ENCODE measurements at regions of chr1 and their contacts with region 1.

Region 1: DNA sequence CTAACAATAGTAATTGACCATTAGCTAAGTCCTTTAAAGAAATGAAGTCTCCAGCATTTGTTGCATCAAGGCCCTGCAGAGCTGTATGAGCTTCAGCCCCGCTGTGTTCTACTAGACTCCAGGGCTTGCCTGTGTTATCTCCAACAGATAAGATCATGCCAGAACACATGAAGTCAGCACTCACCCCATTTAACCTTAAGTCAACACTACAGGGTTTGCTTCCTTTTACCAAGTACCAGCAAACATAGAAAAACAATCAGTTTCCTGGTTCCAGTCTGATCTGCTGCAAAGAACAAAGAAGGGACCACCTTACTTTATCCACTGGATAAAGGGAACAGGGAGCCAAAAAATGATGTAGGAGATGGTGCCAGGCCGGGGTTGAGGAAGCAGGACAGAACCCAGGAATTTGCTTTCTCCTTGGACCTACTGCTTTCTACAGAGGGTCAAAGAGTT is 41.3 kb upstream of the ENAH start:
- DNase-seq: peak in 4 of 5 donors; percentile 41 to 65 (median 54)
- ATAC-seq: peak; percentile 90 to 98 (median 94)
- H3K4me3 ChIP-seq: no peak overlapping the region
- H3K27ac ChIP-seq: peak overlapping the region in 9 of 12 donors; percentile 14 to 78 (median 52)
- H3K4me1 ChIP-seq: peaks cover 0 to 76% (median 37%) of the 10 kb centered on the region in 12 donors
- H3K27me3 ChIP-seq: no peaks in the 10 kb centered on the region
- CTCF ChIP-seq: no peak
- POLR2A ChIP-seq: no peak

Region 2: DNA sequence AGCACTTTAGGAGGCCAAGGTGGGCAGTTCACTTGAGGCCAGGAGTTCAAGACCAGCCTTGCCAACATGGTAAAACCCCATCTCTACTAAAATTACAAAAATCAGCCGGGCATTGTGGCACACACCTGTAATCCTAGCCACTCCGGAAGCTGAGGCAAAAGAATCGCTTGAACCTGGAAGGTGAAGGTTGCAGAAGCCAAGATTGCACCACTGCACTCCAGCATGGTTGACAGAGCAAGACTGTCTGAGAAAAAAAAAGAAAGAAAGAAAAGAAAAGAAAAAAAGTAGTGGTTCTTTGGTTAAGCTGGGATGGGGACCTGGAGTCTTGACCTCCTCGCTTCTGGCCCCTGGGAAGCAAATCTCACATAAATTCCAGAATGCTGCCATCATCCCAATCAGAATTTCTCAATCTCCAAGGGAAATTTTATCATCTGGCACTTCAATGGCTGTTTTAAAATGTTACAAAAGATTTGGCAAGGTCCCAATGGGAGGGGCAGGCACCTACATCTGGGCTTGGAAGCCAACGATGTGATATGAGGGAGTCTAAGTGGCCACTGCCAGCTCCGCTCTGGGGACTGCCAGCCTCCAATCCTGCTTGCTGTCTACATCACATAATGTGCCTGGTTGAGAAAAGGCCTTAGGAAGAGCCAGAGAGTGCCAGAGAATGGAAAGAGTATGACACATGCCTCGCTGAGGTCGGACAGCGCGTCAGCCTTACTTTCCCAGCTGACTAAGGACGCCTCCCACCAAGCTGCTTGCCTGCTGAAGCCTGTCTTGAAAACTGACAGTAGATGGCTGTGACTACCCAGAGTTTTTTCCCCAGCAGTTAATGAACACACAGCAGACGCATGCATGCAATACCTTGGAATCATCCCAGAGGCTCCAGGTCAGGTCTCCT is 41.3 kb after region 1 on chr1:
- intact Hi-C with region 1: loop called in 3 of 10 experiments (anchors 5 to 10 kb)
- DNase-seq: peak; percentile 56 to 90 (median 74)
- ATAC-seq: peak; percentile 85 to 99 (median 97)
- H3K4me3 ChIP-seq: no peak overlapping the region
- H3K27ac ChIP-seq: peak overlapping the region; percentile 36 to 81 (median 60)
- H3K4me1 ChIP-seq: peaks cover 0 to 27% (median 21%) of the 10 kb centered on the region in 12 donors
- H3K27me3 ChIP-seq: no peaks in the 10 kb centered on the region
- CTCF ChIP-seq: peak in 2 of 12 donors; percentile 23
- POLR2A ChIP-seq: no peak

Region 3: GRCh38 chr1:225746361-225747179 is 52.4 kb after region 1 on chr1:
- intact Hi-C with region 1: loop called in 5 of 10 experiments (anchors 5 to 10 kb)
- DNase-seq: peak; percentile 78 to 85 (median 83)
- ATAC-seq: peak; percentile 91 to 98 (median 97)
- H3K4me3 ChIP-seq: peak overlapping the region in 11 of 12 donors; percentile 3 to 60 (median 48)
- H3K27ac ChIP-seq: peak overlapping the region; percentile 78 to 96 (median 88)
- H3K4me1 ChIP-seq: peaks cover 2 to 48% (median 27%) of the 10 kb centered on the region in 12 donors
- H3K27me3 ChIP-seq: no peaks in the 10 kb centered on the region
- CTCF ChIP-seq: peak in 6 of 12 donors; percentile 13 to 33 (median 28)
- POLR2A ChIP-seq: no peak

Region 4: DNA sequence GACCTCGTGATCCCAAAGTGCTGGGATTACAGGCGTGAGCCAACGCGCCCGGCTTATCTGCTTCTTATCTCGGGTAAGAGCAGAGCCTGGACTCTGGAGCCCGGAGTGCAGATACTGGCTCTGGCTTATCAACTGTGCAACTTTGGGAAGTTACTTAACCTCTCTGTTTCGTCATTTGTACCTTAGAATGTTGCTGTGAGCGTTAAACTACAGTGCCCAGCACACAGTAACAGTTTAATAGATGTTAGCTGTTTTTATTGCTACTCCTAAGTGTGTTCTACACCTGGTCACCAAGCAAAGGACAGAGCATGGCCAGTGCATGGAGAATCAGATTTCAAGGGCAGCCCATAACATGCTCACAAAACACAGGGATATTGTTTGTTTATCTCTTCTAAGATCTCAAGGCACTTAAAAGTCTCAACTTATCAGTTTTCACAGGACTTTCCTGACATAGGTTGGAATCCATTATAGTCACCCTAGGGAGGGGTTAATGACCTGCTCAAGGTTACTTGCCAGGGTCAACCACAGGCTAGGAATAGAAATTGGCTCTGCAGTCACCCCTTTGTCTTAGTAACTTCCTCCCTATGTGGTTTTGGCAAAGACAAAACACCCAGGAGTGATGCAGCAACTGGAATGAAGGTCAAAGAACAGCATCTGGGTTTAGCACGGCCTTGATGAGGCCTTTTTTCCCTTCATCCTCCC is 60.9 kb after region 1 on chr1:
- intact Hi-C with region 1: loop called in 3 of 10 experiments (anchors 5 to 10 kb)
- DNase-seq: peak; percentile 48 to 74 (median 64)
- ATAC-seq: peak; percentile 81 to 93 (median 88)
- H3K4me3 ChIP-seq: no peak overlapping the region
- H3K27ac ChIP-seq: peak overlapping the region; percentile 53 to 92 (median 76)
- H3K4me1 ChIP-seq: peaks cover 0 to 71% (median 43%) of the 10 kb centered on the region in 12 donors
- H3K27me3 ChIP-seq: no peaks in the 10 kb centered on the region
- CTCF ChIP-seq: no peak
- POLR2A ChIP-seq: no peak

Region 5: DNA sequence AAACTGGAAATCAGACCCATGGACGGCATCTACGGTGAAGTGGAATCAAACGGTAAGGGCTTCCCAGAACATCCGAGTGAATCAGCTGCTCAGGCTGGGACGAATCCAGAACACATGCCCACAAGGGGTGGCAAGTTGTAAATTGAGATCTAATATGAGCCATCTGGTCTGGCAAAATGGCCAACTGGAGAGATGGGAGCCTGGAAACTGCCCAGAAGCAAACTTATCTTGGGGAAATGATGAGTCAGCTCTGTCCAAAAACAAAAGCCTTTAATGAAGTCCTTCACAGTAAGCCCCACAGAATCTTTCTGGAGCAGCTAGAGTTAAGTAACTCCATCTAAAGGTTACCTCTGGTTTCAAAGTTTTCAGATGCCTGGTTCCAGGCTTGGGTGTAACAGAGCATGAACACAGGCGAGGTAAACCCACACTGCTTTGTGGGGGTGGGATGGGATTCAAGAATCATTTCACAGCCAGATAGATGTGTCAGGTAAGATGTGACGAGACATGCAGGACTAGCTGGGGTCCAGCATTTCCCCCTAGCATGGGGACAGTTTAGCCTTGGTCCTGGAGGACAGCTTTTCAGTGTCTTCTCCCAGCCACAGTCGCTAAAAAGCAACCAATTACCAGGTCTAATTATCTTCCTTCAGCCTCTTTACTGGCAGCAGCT is 72.9 kb after region 1 on chr1:
- intact Hi-C with region 1: loop called in 2 of 10 experiments (anchors 5 to 10 kb)
- DNase-seq: peak in 4 of 5 donors; percentile 40 to 70 (median 57)
- ATAC-seq: peak; percentile 32 to 65 (median 54)
- H3K4me3 ChIP-seq: no peak overlapping the region
- H3K27ac ChIP-seq: peak overlapping the region; percentile 55 to 89 (median 79)
- H3K4me1 ChIP-seq: peaks cover 8 to 87% (median 63%) of the 10 kb centered on the region in 12 donors
- H3K27me3 ChIP-seq: no peaks in the 10 kb centered on the region
- CTCF ChIP-seq: no peak
- POLR2A ChIP-seq: no peak

Measured in heart left ventricle (tissue), 16 donors.